ENCODE measurements at regions of chr17 and their contacts with region 1.

Region 1: GRCh38 chr17:75289115-75289831 is at the start of gene SLC25A19:
- DNase-seq: peak; percentile 97
- H3K4me3 Mint-ChIP-seq: peak within 1 kb of the TSS; percentile 90
- H3K27ac Mint-ChIP-seq: peak within 1 kb of the TSS; percentile 92
- H3K4me1 Mint-ChIP-seq: peaks cover 9% of the 10 kb centered on the region
- H3K27me3 Mint-ChIP-seq: no peaks in the 10 kb centered on the region
- CTCF ChIP-seq: no peak
- total RNA-seq, gene SLC25A19: 26.7 and 26.8 TPM in 2 replicates

Region 2: DNA sequence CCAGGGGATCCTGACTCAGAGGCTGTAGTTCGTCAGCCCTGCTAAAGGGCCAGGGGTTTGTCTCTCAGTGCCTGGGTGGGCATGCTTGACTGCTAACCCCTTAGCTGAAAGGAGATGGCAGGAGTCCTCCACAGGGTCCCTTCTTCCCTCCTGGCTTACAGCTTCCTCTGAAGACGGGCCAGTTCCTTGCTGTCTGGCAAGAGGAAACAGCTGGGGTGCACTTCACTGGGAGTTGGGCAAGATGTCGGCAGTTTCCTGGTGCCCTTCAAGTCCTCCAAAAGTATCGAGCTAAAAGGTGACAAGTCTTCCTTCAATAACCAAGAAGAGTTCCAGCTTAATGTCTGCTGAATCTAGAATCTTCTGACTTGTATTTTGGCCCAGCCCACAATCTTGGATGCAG is 60.4 kb before region 1 on chr17:
- CTCF ChIA-PET with region 1: no interaction called
- intact Hi-C with region 1: no loop called
- DNase-seq: no peak
- H3K4me3 Mint-ChIP-seq: no peak overlapping the region
- H3K27ac Mint-ChIP-seq: no peak overlapping the region
- H3K4me1 Mint-ChIP-seq: no peaks in the 10 kb centered on the region
- H3K27me3 Mint-ChIP-seq: no peaks in the 10 kb centered on the region
- CTCF ChIP-seq: no peak

Region 3: DNA sequence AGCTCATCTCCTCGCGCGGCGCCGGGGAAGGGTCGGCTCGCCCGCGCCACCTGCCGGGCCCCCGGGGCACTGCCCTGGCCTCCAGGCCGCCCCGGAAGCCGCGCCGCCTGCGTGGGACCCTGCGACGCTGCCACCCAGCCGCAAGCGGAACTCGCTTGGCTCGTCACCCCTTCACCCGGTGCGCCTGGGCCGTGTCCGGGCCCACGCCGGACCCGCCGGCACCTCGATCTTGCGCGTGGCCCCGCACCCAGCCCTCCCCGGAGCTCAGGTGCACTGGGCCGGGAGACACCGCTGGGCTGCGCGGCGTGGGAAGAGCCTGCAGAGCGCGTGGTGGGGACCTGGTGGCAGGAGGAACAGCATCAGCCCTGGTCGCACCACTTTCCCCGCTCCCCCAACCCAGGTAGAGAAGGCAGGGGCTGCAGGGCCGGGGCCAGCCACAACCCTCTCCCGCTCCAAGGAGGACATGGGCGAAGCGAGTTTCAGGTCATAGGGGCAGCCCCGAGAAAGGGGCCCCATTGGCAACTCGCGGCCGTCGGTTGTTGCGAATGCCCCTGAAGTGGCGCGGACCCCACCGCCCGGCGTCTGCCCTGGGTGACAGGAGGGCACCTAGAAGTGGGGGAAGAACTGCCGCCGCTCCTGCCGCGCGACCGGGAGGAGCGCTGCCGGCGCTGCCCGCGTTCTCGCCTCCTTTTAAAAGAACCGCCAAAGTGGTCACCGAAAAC is 17.9 kb before region 1 on chr17:
- CTCF ChIA-PET with region 1: interaction called, 32 read pairs
- intact Hi-C with region 1: no loop called
- DNase-seq: peak; percentile 92
- H3K4me3 Mint-ChIP-seq: peak overlapping the region; percentile 91
- H3K27ac Mint-ChIP-seq: peak overlapping the region; percentile 73
- H3K4me1 Mint-ChIP-seq: peaks cover 13% of the 10 kb centered on the region
- H3K27me3 Mint-ChIP-seq: no peaks in the 10 kb centered on the region
- CTCF ChIP-seq: peak; percentile 70

Region 4: GRCh38 chr17:75338335-75338734 is 49.1 kb after region 1 on chr17:
- CTCF ChIA-PET with region 1: no interaction called
- intact Hi-C with region 1: loop called (anchors 1 kb)
- DNase-seq: no peak
- H3K4me3 Mint-ChIP-seq: no peak overlapping the region
- H3K27ac Mint-ChIP-seq: no peak overlapping the region
- H3K4me1 Mint-ChIP-seq: peaks cover 15% of the 10 kb centered on the region
- H3K27me3 Mint-ChIP-seq: no peaks in the 10 kb centered on the region
- CTCF ChIP-seq: no peak

Measured in Calu3 (cell line).